ENCODE measurements at regions of chr13 and their contacts with region 1.

Region 1: DNA sequence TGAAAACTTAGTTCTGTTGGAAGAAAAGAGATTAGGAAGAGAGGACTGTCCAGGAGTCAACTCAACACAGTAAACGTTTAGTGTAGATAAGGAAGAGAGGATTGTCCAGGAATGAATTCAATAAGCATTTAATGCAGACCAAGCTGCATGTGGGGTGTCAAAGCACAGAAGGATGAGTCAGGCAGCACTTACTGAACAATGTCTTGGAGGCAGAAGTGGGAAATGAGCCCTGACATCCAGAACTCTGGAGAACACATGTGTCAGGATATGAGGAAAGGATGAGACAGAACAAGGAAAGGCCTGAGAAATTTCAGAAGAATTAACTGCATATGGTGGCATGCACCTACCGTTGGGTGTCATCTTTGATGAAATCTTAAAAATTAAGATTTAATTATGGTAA is 429.2 kb upstream of the HTR2A start:
- DNase-seq: no peak
- CTCF ChIP-seq: no peak

Region 2: GRCh38 chr13:47310376-47310775 is 15.7 kb before region 1 on chr13:
- CTCF ChIA-PET with region 1: interaction called, 10 read pairs
- POLR2A ChIA-PET with region 1: no interaction called
- DNase-seq: no peak
- CTCF ChIP-seq: no peak

Measured in GM10248 (cell line).